ENCODE measurements at regions of chr2 and their contacts with region 1.

Region 1: DNA sequence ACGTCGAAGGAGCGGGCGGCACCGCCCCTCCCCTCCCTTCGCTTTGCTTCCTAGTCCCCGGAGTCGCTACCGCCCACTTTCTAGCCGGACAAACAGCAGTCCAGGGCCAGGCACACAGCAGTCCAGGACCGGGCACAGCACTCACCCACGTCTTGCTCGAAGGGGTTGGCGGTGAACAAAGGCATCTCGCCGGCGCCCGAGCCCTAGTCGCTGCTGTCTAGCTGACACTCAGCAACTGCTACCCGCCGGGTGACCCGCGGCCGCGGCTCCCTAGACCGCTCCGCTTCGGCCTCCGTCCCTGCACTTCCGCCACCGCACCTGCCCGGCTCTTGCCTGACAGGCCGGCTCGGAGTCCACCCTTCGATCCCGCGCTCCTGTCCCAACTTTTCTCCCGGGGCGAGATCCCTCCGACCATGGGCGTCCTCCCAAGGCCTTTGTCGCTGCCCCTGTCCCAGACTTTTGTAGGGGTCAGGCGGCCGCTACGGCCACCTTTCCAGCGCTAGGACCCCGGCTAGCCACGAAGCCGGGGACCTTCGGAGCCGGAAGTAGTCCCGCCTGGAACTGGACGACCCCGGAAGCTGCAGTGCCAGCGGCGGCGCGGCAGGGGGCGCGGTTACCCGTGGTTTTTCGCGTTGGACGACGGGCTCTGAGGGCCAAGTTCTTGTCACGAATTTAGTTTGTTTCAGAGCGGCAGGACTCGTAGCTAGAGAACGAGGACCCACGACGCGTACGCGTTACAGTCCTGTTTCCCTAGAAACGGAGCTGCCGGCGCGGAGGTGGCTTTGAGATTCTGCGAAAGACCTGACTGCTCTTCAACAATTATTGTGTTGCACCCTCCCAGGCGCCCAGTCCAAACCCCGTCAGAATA is at the start of gene STAM2:
- DNase-seq: peak; percentile 87 to 97 (median 93)
- ATAC-seq: peak; percentile 86
- H3K4me3 ChIP-seq: peak within 1 kb of the TSS; percentile 91 to 92
- H3K4me3 Mint-ChIP-seq: peak within 1 kb of the TSS; percentile 96
- H3K27ac ChIP-seq: peak within 1 kb of the TSS; percentile 81 to 99
- H3K27ac Mint-ChIP-seq: peak within 1 kb of the TSS; percentile 99
- H3K4me1 ChIP-seq: peaks cover 15% of the 10 kb centered on the region
- H3K4me1 Mint-ChIP-seq: peaks cover 35% of the 10 kb centered on the region
- H3K27me3 ChIP-seq: no peaks in the 10 kb centered on the region
- H3K27me3 Mint-ChIP-seq: no peaks in the 10 kb centered on the region
- CTCF ChIP-seq: peak; percentile 96
- total RNA-seq, gene STAM2: 3.2 to 5.7 TPM

Region 2: DNA sequence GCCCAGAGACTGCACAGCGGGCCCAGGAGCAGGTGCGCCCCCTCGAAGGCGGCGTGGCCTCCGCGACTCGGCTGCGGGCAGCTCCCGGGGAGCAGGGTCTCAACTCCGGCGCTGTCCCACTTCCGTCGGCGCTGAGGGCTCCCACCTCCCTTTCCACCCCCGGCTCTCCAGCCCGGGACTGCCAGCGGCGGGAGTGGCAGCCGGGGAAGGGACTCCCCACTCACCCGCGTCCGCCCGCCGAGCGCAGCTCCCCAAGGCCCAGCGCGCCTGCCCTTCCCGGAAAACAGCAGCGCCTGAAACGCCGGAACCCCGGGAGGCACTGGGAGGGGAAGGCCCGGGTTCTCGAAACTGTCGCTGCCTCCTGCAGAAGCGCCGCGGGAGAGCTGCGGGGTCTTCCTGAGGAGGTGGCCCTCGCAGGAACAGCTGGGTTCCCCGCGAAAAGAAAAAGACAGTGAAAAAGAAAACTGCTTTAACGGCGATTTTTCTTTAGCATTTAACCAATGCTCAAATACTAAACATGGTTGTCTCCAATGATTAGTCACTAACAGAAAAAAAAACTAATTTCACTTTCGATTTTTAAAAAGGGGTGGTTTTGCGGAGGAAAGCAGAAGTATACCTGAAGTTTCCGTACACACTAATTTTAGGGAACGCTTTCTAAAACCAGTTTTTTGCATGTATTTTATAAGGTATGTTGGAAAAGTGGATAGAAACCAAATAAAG is 886.2 kb before region 1 on chr2 and contains the start of gene NMI:
- CTCF ChIA-PET with region 1: no interaction called
- POLR2A ChIA-PET with region 1: no interaction called
- intact Hi-C with region 1: loop called in 1 of 2 experiments (anchors 10 kb)
- DNase-seq: peak; percentile 30 to 82 (median 64)
- ATAC-seq: peak; percentile 68
- H3K4me3 ChIP-seq: peak within 1 kb of the TSS; percentile 89 to 92
- H3K4me3 Mint-ChIP-seq: peak within 1 kb of the TSS; percentile 95
- H3K27ac ChIP-seq: peak within 1 kb of the TSS; percentile 92 to 97
- H3K27ac Mint-ChIP-seq: peak within 1 kb of the TSS; percentile 99
- H3K4me1 ChIP-seq: peaks cover 31% of the 10 kb centered on the region
- H3K4me1 Mint-ChIP-seq: peaks cover 46% of the 10 kb centered on the region
- H3K27me3 ChIP-seq: no peaks in the 10 kb centered on the region
- H3K27me3 Mint-ChIP-seq: no peaks in the 10 kb centered on the region
- CTCF ChIP-seq: no peak
- total RNA-seq, gene NMI: 16.9 to 18.0 TPM

Region 3: GRCh38 chr2:151614606-151615306 is 560.9 kb before region 1 on chr2:
- CTCF ChIA-PET with region 1: no interaction called
- POLR2A ChIA-PET with region 1: no interaction called
- intact Hi-C with region 1: no loop called
- DNase-seq: peak in 1 of 9 experiments; percentile 9
- ATAC-seq: no peak
- H3K4me3 ChIP-seq: no peak overlapping the region
- H3K4me3 Mint-ChIP-seq: no peak overlapping the region
- H3K27ac ChIP-seq: no peak overlapping the region
- H3K27ac Mint-ChIP-seq: no peak overlapping the region
- H3K4me1 ChIP-seq: no peaks in the 10 kb centered on the region
- H3K4me1 Mint-ChIP-seq: peaks cover 10% of the 10 kb centered on the region
- H3K27me3 ChIP-seq: no peaks in the 10 kb centered on the region
- H3K27me3 Mint-ChIP-seq: no peaks in the 10 kb centered on the region
- CTCF ChIP-seq: no peak

Region 4: DNA sequence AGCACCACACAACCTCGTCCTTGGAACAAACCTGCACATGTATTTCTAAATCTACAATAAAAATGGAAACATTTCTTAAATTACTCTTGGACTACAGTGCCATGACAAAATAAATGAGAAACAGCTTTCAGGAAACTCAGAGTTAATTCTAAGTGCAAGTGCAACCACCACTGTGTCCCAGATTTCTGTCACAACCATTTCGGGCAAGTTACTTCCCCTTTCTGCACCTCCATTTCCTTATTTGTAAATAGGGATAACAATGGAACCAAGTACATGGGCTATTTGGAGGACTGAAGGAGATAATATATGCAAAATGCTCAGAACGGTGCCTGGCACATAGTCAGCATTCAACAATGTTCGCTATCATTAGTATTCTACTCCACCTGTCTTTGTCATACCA is 170.1 kb before region 1 on chr2:
- CTCF ChIA-PET with region 1: no interaction called
- POLR2A ChIA-PET with region 1: no interaction called
- intact Hi-C with region 1: no loop called
- DNase-seq: no peak
- ATAC-seq: no peak
- H3K4me3 ChIP-seq: no peak overlapping the region
- H3K4me3 Mint-ChIP-seq: no peak overlapping the region
- H3K27ac ChIP-seq: no peak overlapping the region
- H3K27ac Mint-ChIP-seq: no peak overlapping the region
- H3K4me1 ChIP-seq: no peaks in the 10 kb centered on the region
- H3K4me1 Mint-ChIP-seq: peaks cover 8% of the 10 kb centered on the region
- H3K27me3 ChIP-seq: no peaks in the 10 kb centered on the region
- H3K27me3 Mint-ChIP-seq: peaks cover 5% of the 10 kb centered on the region
- CTCF ChIP-seq: no peak

Region 5: DNA sequence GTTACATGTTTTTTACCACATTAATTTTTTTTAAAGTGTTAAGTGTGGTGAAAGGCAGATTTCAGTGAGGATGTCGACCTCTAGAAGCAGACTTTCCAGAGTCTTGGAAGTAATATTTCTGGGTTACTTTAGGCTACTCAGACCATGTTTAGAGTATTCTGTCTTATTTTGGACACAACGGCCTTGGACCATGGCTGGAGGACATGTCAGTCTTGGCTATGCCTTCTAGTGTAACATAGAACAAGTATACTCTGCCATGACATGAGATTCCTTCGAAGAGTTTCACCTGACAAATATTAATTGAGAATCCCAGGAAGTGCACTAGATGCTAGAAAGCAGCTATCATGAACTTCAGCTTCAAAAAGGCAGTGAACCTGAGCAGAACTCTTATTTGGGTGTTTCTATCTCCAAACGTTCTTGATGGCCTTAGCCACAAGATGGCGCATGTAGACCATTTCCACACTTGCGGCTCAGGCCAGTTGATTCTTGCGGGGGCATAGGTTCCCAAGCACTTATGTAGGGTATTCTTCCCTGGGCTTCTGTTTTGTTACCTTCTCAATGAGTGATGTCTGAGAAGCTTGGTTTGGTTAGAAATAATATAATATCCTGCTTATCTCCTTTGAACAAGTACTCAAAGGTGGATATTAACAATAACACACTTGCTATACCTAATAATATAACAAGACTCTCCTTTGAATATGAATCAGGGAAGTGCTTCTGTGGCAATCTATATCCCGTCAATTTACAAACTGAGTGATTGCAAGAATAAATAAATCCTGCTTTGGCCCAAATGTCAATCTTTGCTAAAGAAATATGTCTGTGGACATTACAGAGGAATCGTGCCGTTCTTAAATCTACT is 138.9 kb before region 1 on chr2:
- CTCF ChIA-PET with region 1: interaction called, 3 read pairs
- POLR2A ChIA-PET with region 1: no interaction called
- intact Hi-C with region 1: loop called in 1 of 2 experiments (anchors 5 kb)
- DNase-seq: peak; percentile 3 to 69 (median 49)
- ATAC-seq: peak; percentile 55
- H3K4me3 ChIP-seq: no peak overlapping the region
- H3K4me3 Mint-ChIP-seq: no peak overlapping the region
- H3K27ac ChIP-seq: no peak overlapping the region
- H3K27ac Mint-ChIP-seq: no peak overlapping the region
- H3K4me1 ChIP-seq: no peaks in the 10 kb centered on the region
- H3K4me1 Mint-ChIP-seq: no peaks in the 10 kb centered on the region
- H3K27me3 ChIP-seq: no peaks in the 10 kb centered on the region
- H3K27me3 Mint-ChIP-seq: peaks cover 3% of the 10 kb centered on the region
- CTCF ChIP-seq: peak; percentile 60

Region 6: GRCh38 chr2:152635635-152636298 is 460.1 kb after region 1 on chr2:
- CTCF ChIA-PET with region 1: interaction called, 37 read pairs
- POLR2A ChIA-PET with region 1: interaction called, 10 read pairs
- intact Hi-C with region 1: loop called (anchors 1 kb)
- DNase-seq: peak; percentile 20 to 75 (median 66)
- ATAC-seq: peak; percentile 54
- H3K4me3 ChIP-seq: no peak overlapping the region
- H3K4me3 Mint-ChIP-seq: no peak overlapping the region
- H3K27ac ChIP-seq: no peak overlapping the region
- H3K27ac Mint-ChIP-seq: no peak overlapping the region
- H3K4me1 ChIP-seq: no peaks in the 10 kb centered on the region
- H3K4me1 Mint-ChIP-seq: peaks cover 6% of the 10 kb centered on the region
- H3K27me3 ChIP-seq: no peaks in the 10 kb centered on the region
- H3K27me3 Mint-ChIP-seq: peaks cover 8% of the 10 kb centered on the region
- CTCF ChIP-seq: peak; percentile 78

Region 7: GRCh38 chr2:152740743-152741328 is 565.1 kb after region 1 on chr2:
- CTCF ChIA-PET with region 1: no interaction called
- POLR2A ChIA-PET with region 1: interaction called, 6 read pairs
- intact Hi-C with region 1: loop called in 1 of 2 experiments (anchors 2 kb)
- DNase-seq: peak in 2 of 9 experiments; percentile 57 to 69
- ATAC-seq: peak; percentile 89
- H3K4me3 ChIP-seq: no peak overlapping the region
- H3K4me3 Mint-ChIP-seq: no peak overlapping the region
- H3K27ac ChIP-seq: no peak overlapping the region
- H3K27ac Mint-ChIP-seq: no peak overlapping the region
- H3K4me1 ChIP-seq: no peaks in the 10 kb centered on the region
- H3K4me1 Mint-ChIP-seq: peaks cover 2% of the 10 kb centered on the region
- H3K27me3 ChIP-seq: no peaks in the 10 kb centered on the region
- H3K27me3 Mint-ChIP-seq: no peaks in the 10 kb centered on the region
- CTCF ChIP-seq: peak; percentile 100